ENCODE measurements at regions of chr1 and their contacts with region 1.

Region 1: GRCh38 chr1:43073490-43074230 is 98.4 kb downstream of the EBNA1BP2 start:
- DNase-seq: peak; percentile 79 to 80
- H3K4me3 ChIP-seq: no peak overlapping the region
- H3K4me3 Mint-ChIP-seq: no peak overlapping the region
- H3K27ac Mint-ChIP-seq: no peak overlapping the region
- H3K4me1 ChIP-seq: peaks cover 52% of the 10 kb centered on the region
- H3K4me1 Mint-ChIP-seq: peaks cover 36% of the 10 kb centered on the region
- H3K27me3 ChIP-seq: no peaks in the 10 kb centered on the region
- H3K27me3 Mint-ChIP-seq: no peaks in the 10 kb centered on the region
- CTCF ChIP-seq: peak; percentile 63 to 83

Region 2: GRCh38 chr1:42777852-42778251 is 295.8 kb before region 1 on chr1:
- CTCF ChIA-PET with region 1: interaction called, 10 read pairs
- POLR2A ChIA-PET with region 1: no interaction called
- intact Hi-C with region 1: loop called (anchors 1 kb)
- DNase-seq: peak in 1 of 2 experiments; percentile 51
- H3K4me3 ChIP-seq: no peak overlapping the region
- H3K4me3 Mint-ChIP-seq: no peak overlapping the region
- H3K27ac Mint-ChIP-seq: no peak overlapping the region
- H3K4me1 ChIP-seq: no peaks in the 10 kb centered on the region
- H3K4me1 Mint-ChIP-seq: no peaks in the 10 kb centered on the region
- H3K27me3 ChIP-seq: no peaks in the 10 kb centered on the region
- H3K27me3 Mint-ChIP-seq: no peaks in the 10 kb centered on the region
- CTCF ChIP-seq: peak; percentile 50 to 61

Region 3: DNA sequence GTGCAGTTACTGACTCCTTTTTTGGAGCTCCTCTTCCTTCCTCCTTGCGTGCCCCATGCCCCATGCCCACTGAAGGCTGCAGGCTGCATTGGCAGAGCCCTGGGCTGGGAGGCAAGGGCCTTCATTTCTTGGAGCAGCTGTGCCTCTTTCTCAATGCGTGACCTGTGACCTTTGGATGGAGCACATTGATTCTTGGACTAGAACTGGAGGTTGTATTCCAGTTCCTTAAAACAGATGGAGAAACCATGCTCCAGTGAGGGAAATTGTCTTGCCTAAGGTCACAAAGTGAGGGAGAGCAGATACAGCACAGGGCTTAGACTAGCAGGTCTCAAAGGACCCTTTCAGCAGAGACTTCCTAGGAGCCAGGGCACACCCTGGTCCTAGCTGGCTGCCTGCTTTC is 279.8 kb before region 1 on chr1:
- CTCF ChIA-PET with region 1: no interaction called
- POLR2A ChIA-PET with region 1: no interaction called
- intact Hi-C with region 1: no loop called
- DNase-seq: no peak
- H3K4me3 ChIP-seq: no peak overlapping the region
- H3K4me3 Mint-ChIP-seq: no peak overlapping the region
- H3K27ac Mint-ChIP-seq: no peak overlapping the region
- H3K4me1 ChIP-seq: no peaks in the 10 kb centered on the region
- H3K4me1 Mint-ChIP-seq: no peaks in the 10 kb centered on the region
- H3K27me3 ChIP-seq: no peaks in the 10 kb centered on the region
- H3K27me3 Mint-ChIP-seq: no peaks in the 10 kb centered on the region
- CTCF ChIP-seq: no peak

Region 4: DNA sequence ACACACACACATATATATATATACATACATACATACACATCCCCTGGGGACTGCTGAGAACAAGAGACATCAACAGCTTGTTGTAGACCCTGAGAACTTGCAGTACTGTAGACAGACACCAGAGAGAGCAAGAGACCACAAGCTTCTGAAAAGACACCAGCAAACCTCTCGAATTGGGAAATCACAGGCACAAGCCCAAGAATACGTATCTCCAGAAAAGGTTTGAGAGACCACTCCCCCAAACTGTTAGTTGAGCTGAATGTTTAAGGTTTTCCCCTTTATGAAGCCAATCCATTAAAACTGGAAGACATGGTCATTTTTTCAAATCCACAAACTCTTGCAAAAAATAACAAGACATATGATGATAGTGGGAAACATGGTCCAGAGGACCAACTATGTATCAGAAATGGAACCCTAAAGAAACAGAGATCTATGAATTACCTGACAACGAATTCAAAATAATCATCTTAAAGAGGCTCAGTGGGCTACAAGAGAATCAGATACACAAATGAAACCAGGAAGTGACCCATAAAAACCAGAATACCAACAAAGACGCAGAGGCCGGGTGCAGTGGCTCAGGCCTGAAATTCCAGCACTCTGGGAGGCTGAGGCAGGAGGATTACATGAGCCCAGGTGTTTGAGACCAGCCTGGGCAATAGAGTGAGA is 160.1 kb before region 1 on chr1:
- CTCF ChIA-PET with region 1: interaction called, 137 read pairs
- POLR2A ChIA-PET with region 1: interaction called, 4 read pairs
- intact Hi-C with region 1: loop called (anchors 1 kb)
- DNase-seq: peak; percentile 65 to 72
- H3K4me3 ChIP-seq: no peak overlapping the region
- H3K4me3 Mint-ChIP-seq: no peak overlapping the region
- H3K27ac Mint-ChIP-seq: no peak overlapping the region
- H3K4me1 ChIP-seq: no peaks in the 10 kb centered on the region
- H3K4me1 Mint-ChIP-seq: no peaks in the 10 kb centered on the region
- H3K27me3 ChIP-seq: no peaks in the 10 kb centered on the region
- H3K27me3 Mint-ChIP-seq: no peaks in the 10 kb centered on the region
- CTCF ChIP-seq: peak; percentile 74 to 76

Region 5: DNA sequence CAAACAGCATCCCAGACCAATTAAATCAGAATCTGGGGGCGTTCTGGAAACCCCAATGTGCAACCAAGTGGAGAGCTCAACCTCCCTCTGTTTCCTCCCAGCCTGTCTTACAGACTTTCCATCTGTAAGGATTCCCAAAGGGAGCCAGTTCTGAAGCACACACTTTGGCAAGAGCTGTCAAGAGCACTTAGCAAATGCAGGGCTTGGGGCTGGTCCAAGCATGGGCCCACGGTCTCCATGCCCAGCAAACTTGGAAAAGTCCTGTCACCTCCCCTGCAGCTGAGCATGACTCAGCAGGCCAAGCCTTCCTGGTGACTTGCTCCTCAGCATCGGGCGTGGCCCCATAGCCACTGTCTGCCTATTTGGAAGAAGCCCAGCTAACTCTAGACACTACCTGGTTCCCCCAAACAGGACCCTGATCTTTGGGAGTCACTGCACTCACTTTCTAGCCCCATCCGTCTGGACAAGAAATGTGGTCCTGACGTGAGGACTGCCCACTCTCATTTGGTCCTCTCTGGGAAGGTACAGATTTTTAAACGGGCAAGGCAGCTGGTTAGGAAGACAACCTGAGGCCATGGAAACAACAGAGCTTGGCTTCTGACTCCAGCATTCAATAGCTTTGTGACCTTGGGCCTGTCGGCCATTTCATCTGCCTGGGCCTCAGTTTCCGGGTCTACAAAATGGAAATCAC is 131.9 kb before region 1 on chr1:
- CTCF ChIA-PET with region 1: interaction called, 11 read pairs
- POLR2A ChIA-PET with region 1: no interaction called
- intact Hi-C with region 1: no loop called
- DNase-seq: peak in 1 of 2 experiments; percentile 61
- H3K4me3 ChIP-seq: no peak overlapping the region
- H3K4me3 Mint-ChIP-seq: peak overlapping the region; percentile 65
- H3K27ac Mint-ChIP-seq: peak overlapping the region; percentile 93
- H3K4me1 ChIP-seq: peaks cover 95% of the 10 kb centered on the region
- H3K4me1 Mint-ChIP-seq: peaks cover 68% of the 10 kb centered on the region
- H3K27me3 ChIP-seq: no peaks in the 10 kb centered on the region
- H3K27me3 Mint-ChIP-seq: peaks cover 3% of the 10 kb centered on the region
- CTCF ChIP-seq: no peak

Region 6: DNA sequence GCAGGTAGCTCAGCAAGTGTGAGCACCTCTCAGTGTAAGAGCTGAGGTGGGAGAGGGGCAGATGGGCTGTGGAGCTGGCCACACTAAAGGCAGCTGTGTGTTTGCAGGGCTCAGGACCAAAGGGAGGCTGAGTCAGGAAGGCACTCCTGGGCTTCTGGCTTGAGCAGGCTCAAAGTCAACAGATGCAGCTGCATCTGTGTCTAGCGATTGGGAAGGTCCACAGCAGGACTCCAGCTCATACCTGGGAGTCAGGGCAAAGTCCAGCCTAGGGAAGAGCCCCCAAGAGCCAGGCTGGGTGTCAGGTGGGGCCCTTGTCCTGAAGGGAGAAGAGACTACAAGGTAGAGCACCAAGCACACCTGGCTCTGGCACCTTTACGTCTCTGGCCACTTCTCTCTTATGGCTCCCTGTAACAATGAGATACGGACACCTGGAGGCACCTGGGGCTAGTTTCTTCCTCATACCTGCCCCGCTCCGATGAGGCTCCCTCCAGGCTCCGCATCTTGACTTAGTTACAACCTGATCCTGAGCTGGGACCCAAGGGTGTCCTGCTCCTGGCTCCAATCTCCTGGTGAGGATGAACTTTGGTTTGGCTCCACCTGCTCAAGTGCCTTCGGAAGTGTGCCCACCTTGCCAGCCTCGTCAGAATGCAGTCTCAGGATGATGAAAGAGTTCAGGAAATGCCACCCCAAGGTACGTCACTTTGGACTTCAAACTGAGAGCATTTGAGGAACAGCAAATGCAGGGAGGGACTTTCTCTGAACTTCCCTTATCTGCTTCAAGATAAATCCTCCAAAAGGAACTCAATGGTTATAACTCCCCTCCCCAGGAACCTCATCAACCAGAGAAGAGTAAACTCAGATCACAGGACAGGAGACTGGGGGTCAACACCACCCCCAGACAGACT is 93.5 kb before region 1 on chr1:
- CTCF ChIA-PET with region 1: interaction called, 22 read pairs
- POLR2A ChIA-PET with region 1: no interaction called
- intact Hi-C with region 1: no loop called
- DNase-seq: peak; percentile 77 to 87
- H3K4me3 ChIP-seq: peak overlapping the region; percentile 17
- H3K4me3 Mint-ChIP-seq: peak overlapping the region; percentile 78
- H3K27ac Mint-ChIP-seq: peak overlapping the region; percentile 98
- H3K4me1 ChIP-seq: peaks cover 55% of the 10 kb centered on the region
- H3K4me1 Mint-ChIP-seq: peaks cover 48% of the 10 kb centered on the region
- H3K27me3 ChIP-seq: no peaks in the 10 kb centered on the region
- H3K27me3 Mint-ChIP-seq: no peaks in the 10 kb centered on the region
- CTCF ChIP-seq: no peak

Region 7: DNA sequence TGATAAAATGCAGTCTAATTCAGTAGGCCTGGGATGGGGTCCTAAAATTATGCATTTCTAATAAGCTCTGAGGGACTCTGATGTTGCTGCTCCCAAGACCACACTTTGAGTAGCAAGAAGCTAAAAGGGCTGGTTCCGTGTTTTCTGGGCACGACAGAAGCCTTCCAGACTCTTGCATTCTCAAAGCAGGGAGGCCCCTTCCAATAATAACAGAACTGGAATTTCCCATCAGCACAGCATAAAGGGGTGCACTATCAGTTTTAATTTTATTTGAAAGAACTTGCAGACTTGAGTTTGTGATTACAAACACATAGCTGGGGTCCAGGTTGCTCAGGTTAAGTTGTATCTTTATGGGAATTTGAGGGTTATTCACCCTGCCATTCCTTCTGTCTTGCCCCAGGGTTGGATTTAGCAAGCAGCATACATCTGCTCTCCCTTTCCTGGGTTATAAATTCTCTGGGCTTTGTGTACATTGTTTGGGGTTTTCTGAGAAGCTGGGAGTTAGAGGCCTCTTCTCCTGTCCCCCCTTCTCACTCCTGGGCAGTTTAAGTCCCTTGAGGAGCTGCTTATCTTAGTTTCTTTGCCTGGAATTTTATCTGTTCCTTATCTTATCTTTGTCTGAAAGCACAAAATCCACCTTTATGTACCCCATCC is 20.7 kb before region 1 on chr1:
- CTCF ChIA-PET with region 1: interaction called, 7 read pairs
- POLR2A ChIA-PET with region 1: no interaction called
- intact Hi-C with region 1: loop called (anchors 1 kb)
- DNase-seq: peak; percentile 82 to 89
- H3K4me3 ChIP-seq: no peak overlapping the region
- H3K4me3 Mint-ChIP-seq: peak overlapping the region; percentile 49
- H3K27ac Mint-ChIP-seq: peak overlapping the region; percentile 82
- H3K4me1 ChIP-seq: peaks cover 76% of the 10 kb centered on the region
- H3K4me1 Mint-ChIP-seq: peaks cover 62% of the 10 kb centered on the region
- H3K27me3 ChIP-seq: no peaks in the 10 kb centered on the region
- H3K27me3 Mint-ChIP-seq: no peaks in the 10 kb centered on the region
- CTCF ChIP-seq: no peak

Region 8: DNA sequence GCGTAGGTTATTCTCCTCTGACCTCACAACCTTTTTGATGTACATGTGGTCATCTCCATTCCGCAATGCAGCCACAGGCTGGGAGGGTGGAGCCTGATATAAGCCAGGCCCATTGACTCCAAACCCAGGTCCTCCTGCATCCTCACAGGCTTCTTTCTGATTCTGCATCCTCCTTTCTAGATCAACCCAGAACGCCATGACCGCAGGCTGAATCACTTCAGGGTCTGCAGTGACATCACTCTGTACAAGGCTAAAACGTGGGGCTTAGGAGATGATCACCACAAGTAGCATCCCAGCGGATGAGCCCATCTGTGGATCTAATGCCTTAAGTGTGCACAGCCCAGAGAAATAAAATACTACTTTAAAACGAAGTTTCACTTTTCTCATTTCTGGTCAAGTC is 82.4 kb after region 1 on chr1:
- CTCF ChIA-PET with region 1: no interaction called
- POLR2A ChIA-PET with region 1: no interaction called
- intact Hi-C with region 1: no loop called
- DNase-seq: no peak
- H3K4me3 ChIP-seq: no peak overlapping the region
- H3K4me3 Mint-ChIP-seq: no peak overlapping the region
- H3K27ac Mint-ChIP-seq: no peak overlapping the region
- H3K4me1 ChIP-seq: no peaks in the 10 kb centered on the region
- H3K4me1 Mint-ChIP-seq: no peaks in the 10 kb centered on the region
- H3K27me3 ChIP-seq: no peaks in the 10 kb centered on the region
- H3K27me3 Mint-ChIP-seq: no peaks in the 10 kb centered on the region
- CTCF ChIP-seq: no peak

Measured in Caco-2 (cell line).